MCF 10A (cell line): ENCODE measurements at regions of chr1 and their contacts with region 1.

Region 1: GRCh38 chr1:40385437-40386358 is 12.2 kb downstream of the SMAP2 start:
- DNase-seq: no peak
- H3K4me3 Mint-ChIP-seq: no peak overlapping the region
- H3K27ac Mint-ChIP-seq: peak overlapping the region; percentile 30
- H3K4me1 Mint-ChIP-seq: peaks cover 15% of the 10 kb centered on the region
- H3K27me3 Mint-ChIP-seq: no peaks in the 10 kb centered on the region
- CTCF ChIP-seq: no peak

Region 2: GRCh38 chr1:40232444-40232843 is 153.3 kb before region 1 on chr1:
- CTCF ChIA-PET with region 1: no interaction called
- POLR2A ChIA-PET with region 1: no interaction called
- intact Hi-C with region 1: no loop called
- DNase-seq: no peak
- H3K4me3 Mint-ChIP-seq: no peak overlapping the region
- H3K27ac Mint-ChIP-seq: no peak overlapping the region
- H3K4me1 Mint-ChIP-seq: no peaks in the 10 kb centered on the region
- H3K27me3 Mint-ChIP-seq: no peaks in the 10 kb centered on the region
- CTCF ChIP-seq: no peak

Region 3: GRCh38 chr1:40362699-40363098 is 23.0 kb before region 1 on chr1:
- CTCF ChIA-PET with region 1: no interaction called
- POLR2A ChIA-PET with region 1: no interaction called
- intact Hi-C with region 1: no loop called
- DNase-seq: no peak
- H3K4me3 Mint-ChIP-seq: no peak overlapping the region
- H3K27ac Mint-ChIP-seq: no peak overlapping the region
- H3K4me1 Mint-ChIP-seq: no peaks in the 10 kb centered on the region
- H3K27me3 Mint-ChIP-seq: no peaks in the 10 kb centered on the region
- CTCF ChIP-seq: no peak

Region 4: GRCh38 chr1:40373338-40374283 is 12.1 kb before region 1 on chr1 and contains the start of gene SMAP2:
- CTCF ChIA-PET with region 1: no interaction called
- POLR2A ChIA-PET with region 1: interaction called, 75 read pairs
- intact Hi-C with region 1: no loop called
- DNase-seq: peak; percentile 96
- H3K4me3 Mint-ChIP-seq: peak within 1 kb of the TSS; percentile 90
- H3K27ac Mint-ChIP-seq: peak within 1 kb of the TSS; percentile 69
- H3K4me1 Mint-ChIP-seq: peaks cover 19% of the 10 kb centered on the region
- H3K27me3 Mint-ChIP-seq: no peaks in the 10 kb centered on the region
- CTCF ChIP-seq: no peak
- total RNA-seq, gene SMAP2: 20.2 and 21.2 TPM in 2 replicates

Region 5: DNA sequence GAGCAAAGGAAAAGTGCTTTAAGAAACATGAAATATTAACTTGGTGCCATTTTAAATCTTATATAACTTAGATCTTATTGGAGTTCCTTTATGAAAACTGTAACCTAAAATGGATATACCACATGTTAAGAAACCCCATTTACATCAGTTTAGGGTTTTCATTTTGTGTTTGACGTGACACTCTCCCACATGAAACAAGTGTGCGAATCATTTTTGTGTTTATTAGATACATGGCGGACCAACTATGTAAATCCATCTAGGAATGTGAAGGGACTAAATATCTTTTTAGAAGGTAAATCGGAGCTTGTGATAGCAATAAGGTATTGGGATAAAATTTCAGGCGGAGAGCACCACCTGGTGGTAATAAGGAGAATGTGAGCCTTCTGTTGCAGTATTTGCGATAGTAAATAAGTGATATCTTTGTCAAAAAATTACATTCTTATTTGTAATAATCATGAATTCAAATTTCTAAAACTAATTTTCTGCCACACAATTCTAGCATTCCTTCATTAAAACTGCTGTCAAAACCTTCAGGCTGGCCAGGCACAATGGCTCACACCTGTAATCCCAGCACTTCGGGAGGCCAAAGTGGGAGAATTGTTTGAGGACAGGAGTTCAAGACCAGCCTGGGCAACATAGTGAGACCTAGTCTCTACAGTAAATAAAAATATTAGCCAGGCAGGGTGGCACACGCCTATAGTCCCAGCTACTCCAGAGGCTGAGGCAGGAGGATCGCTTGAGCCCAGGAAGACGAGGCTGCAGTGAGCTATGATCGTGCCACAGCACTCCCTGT is 19.2 kb after region 1 on chr1:
- CTCF ChIA-PET with region 1: interaction called, 17 read pairs
- POLR2A ChIA-PET with region 1: interaction called, 3 read pairs
- intact Hi-C with region 1: no loop called
- DNase-seq: peak; percentile 70
- H3K4me3 Mint-ChIP-seq: no peak overlapping the region
- H3K27ac Mint-ChIP-seq: no peak overlapping the region
- H3K4me1 Mint-ChIP-seq: peaks cover 4% of the 10 kb centered on the region
- H3K27me3 Mint-ChIP-seq: no peaks in the 10 kb centered on the region
- CTCF ChIP-seq: peak; percentile 63

Region 6: GRCh38 chr1:40421431-40422384 is 36.0 kb after region 1 on chr1:
- CTCF ChIA-PET with region 1: no interaction called
- POLR2A ChIA-PET with region 1: no interaction called
- intact Hi-C with region 1: no loop called
- DNase-seq: peak; percentile 77
- H3K4me3 Mint-ChIP-seq: no peak overlapping the region
- H3K27ac Mint-ChIP-seq: peak overlapping the region; percentile 44
- H3K4me1 Mint-ChIP-seq: peaks cover 9% of the 10 kb centered on the region
- H3K27me3 Mint-ChIP-seq: no peaks in the 10 kb centered on the region
- CTCF ChIP-seq: no peak

Region 7: GRCh38 chr1:40825435-40825788 is 439.7 kb after region 1 on chr1:
- CTCF ChIA-PET with region 1: no interaction called
- POLR2A ChIA-PET with region 1: no interaction called
- intact Hi-C with region 1: no loop called
- DNase-seq: no peak
- H3K4me3 Mint-ChIP-seq: no peak overlapping the region
- H3K27ac Mint-ChIP-seq: no peak overlapping the region
- H3K4me1 Mint-ChIP-seq: no peaks in the 10 kb centered on the region
- H3K27me3 Mint-ChIP-seq: no peaks in the 10 kb centered on the region
- CTCF ChIP-seq: no peak